ENCODE measurements at regions of chr4 and their contacts with region 1.

Region 1: DNA sequence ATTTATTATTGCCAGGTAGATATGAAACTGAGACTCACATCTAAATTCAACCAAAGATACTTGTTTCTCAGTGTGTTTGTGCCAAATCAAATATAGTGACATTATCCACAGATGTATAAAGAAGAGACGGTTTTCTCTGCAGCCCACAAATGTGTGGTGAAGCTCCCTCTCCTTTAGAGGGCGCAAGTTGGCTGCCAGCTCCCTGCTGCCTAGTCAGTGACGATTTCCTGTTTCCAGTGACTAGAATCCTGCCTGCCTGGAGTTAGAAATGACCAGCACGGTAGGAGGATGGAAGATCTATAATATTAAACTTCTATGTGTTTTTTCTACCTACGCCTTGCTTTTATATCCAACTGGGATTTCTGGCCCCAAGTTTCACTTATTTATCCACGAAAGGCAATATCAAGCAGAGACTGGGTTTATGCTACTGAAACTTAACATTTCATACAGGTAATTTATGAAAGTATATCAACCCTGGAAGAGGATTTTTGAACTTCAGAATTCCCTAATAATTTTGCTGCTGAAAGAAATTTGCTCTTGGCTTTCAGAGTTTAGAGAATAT is 1793.7 kb upstream of the TENM3 start:
- DNase-seq: no peak
- ATAC-seq: no peak
- H3K4me3 ChIP-seq: no peak overlapping the region
- H3K4me3 Mint-ChIP-seq: no peak overlapping the region
- H3K27ac ChIP-seq: no peak overlapping the region
- H3K27ac Mint-ChIP-seq: no peak overlapping the region
- H3K4me1 ChIP-seq: no peaks in the 10 kb centered on the region
- H3K4me1 Mint-ChIP-seq: no peaks in the 10 kb centered on the region
- H3K27me3 ChIP-seq: no peaks in the 10 kb centered on the region
- H3K27me3 Mint-ChIP-seq: no peaks in the 10 kb centered on the region
- CTCF ChIP-seq: no peak

Region 2: DNA sequence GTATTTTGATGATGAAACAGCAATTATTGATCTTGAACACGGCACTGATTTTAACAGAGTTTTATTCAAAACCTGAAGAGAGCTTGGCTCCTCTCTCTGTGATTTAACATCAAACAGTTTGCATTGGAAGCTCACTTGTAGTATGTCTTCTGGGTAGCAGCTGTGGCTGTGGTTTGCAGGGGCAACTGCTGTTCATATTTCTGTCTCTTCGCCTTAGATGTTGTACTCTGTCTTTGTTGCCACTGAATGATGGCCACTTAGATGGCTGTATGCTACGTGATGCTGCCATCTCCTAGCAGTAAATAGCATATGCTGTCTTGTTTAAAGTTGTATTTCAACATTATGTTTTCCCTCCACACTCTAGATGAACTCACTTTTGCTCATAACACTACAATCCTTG is 50.7 kb after region 1 on chr4:
- CTCF ChIA-PET with region 1: no interaction called
- POLR2A ChIA-PET with region 1: no interaction called
- intact Hi-C with region 1: loop called in 1 of 2 experiments (anchors 5 kb)
- DNase-seq: no peak
- ATAC-seq: no peak
- H3K4me3 ChIP-seq: no peak overlapping the region
- H3K4me3 Mint-ChIP-seq: no peak overlapping the region
- H3K27ac ChIP-seq: no peak overlapping the region
- H3K27ac Mint-ChIP-seq: no peak overlapping the region
- H3K4me1 ChIP-seq: no peaks in the 10 kb centered on the region
- H3K4me1 Mint-ChIP-seq: no peaks in the 10 kb centered on the region
- H3K27me3 ChIP-seq: no peaks in the 10 kb centered on the region
- H3K27me3 Mint-ChIP-seq: no peaks in the 10 kb centered on the region
- CTCF ChIP-seq: no peak

Region 3: GRCh38 chr4:180682776-180683175 is 233.3 kb after region 1 on chr4:
- CTCF ChIA-PET with region 1: no interaction called
- POLR2A ChIA-PET with region 1: no interaction called
- intact Hi-C with region 1: no loop called
- DNase-seq: no peak
- ATAC-seq: no peak
- H3K4me3 ChIP-seq: no peak overlapping the region
- H3K4me3 Mint-ChIP-seq: no peak overlapping the region
- H3K27ac ChIP-seq: no peak overlapping the region
- H3K27ac Mint-ChIP-seq: no peak overlapping the region
- H3K4me1 ChIP-seq: no peaks in the 10 kb centered on the region
- H3K4me1 Mint-ChIP-seq: no peaks in the 10 kb centered on the region
- H3K27me3 ChIP-seq: no peaks in the 10 kb centered on the region
- H3K27me3 Mint-ChIP-seq: no peaks in the 10 kb centered on the region
- CTCF ChIP-seq: no peak

Region 4: GRCh38 chr4:180947425-180947824 is 497.9 kb after region 1 on chr4:
- CTCF ChIA-PET with region 1: no interaction called
- POLR2A ChIA-PET with region 1: no interaction called
- intact Hi-C with region 1: no loop called
- DNase-seq: no peak
- ATAC-seq: no peak
- H3K4me3 ChIP-seq: no peak overlapping the region
- H3K4me3 Mint-ChIP-seq: no peak overlapping the region
- H3K27ac ChIP-seq: no peak overlapping the region
- H3K27ac Mint-ChIP-seq: no peak overlapping the region
- H3K4me1 ChIP-seq: no peaks in the 10 kb centered on the region
- H3K4me1 Mint-ChIP-seq: no peaks in the 10 kb centered on the region
- H3K27me3 ChIP-seq: no peaks in the 10 kb centered on the region
- H3K27me3 Mint-ChIP-seq: no peaks in the 10 kb centered on the region
- CTCF ChIP-seq: no peak

Measured in CD4-positive, alpha-beta T cell (primary cell).